ENCODE measurements at regions of chr2 and their contacts with region 1.

Region 1: GRCh38 chr2:96320728-96321622 is 4.1 kb upstream of the ITPRIPL1 start:
- DNase-seq: peak in 1 of 10 donors; percentile 9
- ATAC-seq: peak; percentile 26 to 35
- H3K4me3 Mint-ChIP-seq: peak overlapping the region; percentile 75 to 94 (median 90)
- H3K27ac Mint-ChIP-seq: peak overlapping the region; percentile 50 to 87 (median 74)
- H3K4me1 Mint-ChIP-seq: peaks cover 25 to 66% (median 60%) of the 10 kb centered on the region in 4 donors
- H3K27me3 Mint-ChIP-seq: no peaks in the 10 kb centered on the region

Region 2: DNA sequence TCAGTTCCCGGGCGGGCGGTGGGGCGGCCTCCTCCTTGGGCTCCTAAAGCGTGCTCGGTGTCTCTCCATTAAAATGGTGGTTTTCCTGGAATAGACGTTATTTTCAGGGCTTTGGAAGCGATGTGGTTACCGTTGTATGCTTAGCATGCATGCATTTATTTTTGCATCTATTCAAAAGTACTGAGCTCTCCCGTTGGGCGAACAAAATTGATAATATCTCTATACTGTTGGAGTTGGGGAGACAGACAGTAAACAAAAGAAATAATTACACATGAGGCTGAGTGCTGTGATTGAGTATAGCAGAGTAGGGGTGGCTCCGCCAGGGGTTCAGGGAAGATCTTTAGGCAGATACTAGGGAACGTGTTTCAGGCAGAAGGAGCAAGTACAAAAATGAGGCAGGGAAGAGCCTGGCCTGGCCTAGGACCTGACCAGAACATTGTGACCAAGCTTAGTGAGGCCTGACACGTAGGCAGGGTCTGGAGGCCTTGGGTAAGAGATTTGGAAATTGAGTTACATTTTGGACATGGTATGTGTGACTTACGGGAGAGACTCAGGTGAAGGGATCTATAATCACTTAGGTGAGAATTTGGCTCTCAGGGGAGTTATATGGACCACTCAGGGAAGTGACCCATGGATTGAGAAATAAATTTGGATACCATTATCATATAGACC is 15.3 kb after region 1 on chr2:
- POLR2A ChIA-PET with region 1: interaction called, 25 read pairs
- DNase-seq: no peak
- ATAC-seq: no peak
- H3K4me3 Mint-ChIP-seq: peak overlapping the region; percentile 72 to 92 (median 85)
- H3K27ac Mint-ChIP-seq: peak overlapping the region in 9 of 10 donors; percentile 7 to 79 (median 62)
- H3K4me1 Mint-ChIP-seq: peaks cover 9 to 33% (median 22%) of the 10 kb centered on the region in 4 donors
- H3K27me3 Mint-ChIP-seq: no peaks in the 10 kb centered on the region

Region 3: GRCh38 chr2:96359310-96359709 is 38.3 kb after region 1 on chr2:
- POLR2A ChIA-PET with region 1: no interaction called
- DNase-seq: peak; percentile 33 to 82 (median 56)
- ATAC-seq: peak; percentile 92 to 99
- H3K4me3 Mint-ChIP-seq: no peak overlapping the region
- H3K27ac Mint-ChIP-seq: peak overlapping the region in 2 of 10 donors; percentile 49 to 82
- H3K4me1 Mint-ChIP-seq: peaks cover 0 to 6% (median 0%) of the 10 kb centered on the region in 4 donors
- H3K27me3 Mint-ChIP-seq: no peaks in the 10 kb centered on the region